ENCODE measurements at regions of chr13 and their contacts with region 1.

Region 1: GRCh38 chr13:98445340-98446233 is 131.3 kb downstream of the STK24 start:
- DNase-seq: peak; percentile 73 to 79 (median 74)
- H3K4me3 ChIP-seq: no peak overlapping the region
- H3K4me3 Mint-ChIP-seq: peak overlapping the region in 7 of 8 donors; percentile 27 to 82 (median 57)
- H3K27ac ChIP-seq: peak overlapping the region; percentile 33
- H3K27ac Mint-ChIP-seq: peak overlapping the region; percentile 88 to 93 (median 90)
- H3K4me1 ChIP-seq: peaks cover 18% of the 10 kb centered on the region
- H3K4me1 Mint-ChIP-seq: peaks cover 7 to 37% (median 23%) of the 10 kb centered on the region in 4 donors
- H3K27me3 ChIP-seq: no peaks in the 10 kb centered on the region
- H3K27me3 Mint-ChIP-seq: no peaks in the 10 kb centered on the region

Region 2: DNA sequence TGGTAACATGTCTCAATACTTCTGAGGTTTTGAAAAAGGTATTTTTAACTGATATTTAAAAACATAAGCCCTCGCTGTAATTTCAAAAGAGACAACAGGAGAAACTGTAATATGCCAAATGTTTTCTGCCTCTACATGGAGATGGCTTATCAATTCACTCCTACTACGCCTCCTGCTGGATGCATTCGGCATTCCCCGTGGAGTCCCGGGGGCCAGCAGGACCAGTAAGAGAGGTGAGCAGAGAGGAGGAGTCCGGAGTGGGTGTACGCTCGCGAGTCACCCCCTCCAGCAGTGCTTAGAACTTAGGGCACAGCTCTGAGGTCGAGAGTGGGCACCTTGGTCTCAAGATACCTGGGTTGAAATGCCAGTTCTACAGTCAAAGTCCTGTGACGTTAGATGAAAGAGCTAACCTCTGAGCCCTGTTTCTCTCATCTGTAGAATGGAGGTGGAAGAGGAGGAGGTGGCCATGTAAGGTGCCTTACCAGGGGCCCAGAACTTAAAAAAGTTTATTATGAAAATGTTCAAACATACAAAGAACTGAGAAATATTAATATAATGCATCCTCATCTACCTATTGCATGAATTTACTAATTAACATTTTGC is 21.1 kb after region 1 on chr13:
- CTCF ChIA-PET with region 1: interaction called, 45 read pairs
- POLR2A ChIA-PET with region 1: no interaction called
- intact Hi-C with region 1: no loop called
- DNase-seq: peak in 1 of 5 donors; percentile 24
- H3K4me3 ChIP-seq: no peak overlapping the region
- H3K4me3 Mint-ChIP-seq: no peak overlapping the region
- H3K27ac ChIP-seq: no peak overlapping the region
- H3K27ac Mint-ChIP-seq: peak overlapping the region in 6 of 7 donors; percentile 47 to 73 (median 58)
- H3K4me1 ChIP-seq: no peaks in the 10 kb centered on the region
- H3K4me1 Mint-ChIP-seq: peaks cover 16 to 35% (median 25%) of the 10 kb centered on the region in 4 donors
- H3K27me3 ChIP-seq: no peaks in the 10 kb centered on the region
- H3K27me3 Mint-ChIP-seq: no peaks in the 10 kb centered on the region

Region 3: DNA sequence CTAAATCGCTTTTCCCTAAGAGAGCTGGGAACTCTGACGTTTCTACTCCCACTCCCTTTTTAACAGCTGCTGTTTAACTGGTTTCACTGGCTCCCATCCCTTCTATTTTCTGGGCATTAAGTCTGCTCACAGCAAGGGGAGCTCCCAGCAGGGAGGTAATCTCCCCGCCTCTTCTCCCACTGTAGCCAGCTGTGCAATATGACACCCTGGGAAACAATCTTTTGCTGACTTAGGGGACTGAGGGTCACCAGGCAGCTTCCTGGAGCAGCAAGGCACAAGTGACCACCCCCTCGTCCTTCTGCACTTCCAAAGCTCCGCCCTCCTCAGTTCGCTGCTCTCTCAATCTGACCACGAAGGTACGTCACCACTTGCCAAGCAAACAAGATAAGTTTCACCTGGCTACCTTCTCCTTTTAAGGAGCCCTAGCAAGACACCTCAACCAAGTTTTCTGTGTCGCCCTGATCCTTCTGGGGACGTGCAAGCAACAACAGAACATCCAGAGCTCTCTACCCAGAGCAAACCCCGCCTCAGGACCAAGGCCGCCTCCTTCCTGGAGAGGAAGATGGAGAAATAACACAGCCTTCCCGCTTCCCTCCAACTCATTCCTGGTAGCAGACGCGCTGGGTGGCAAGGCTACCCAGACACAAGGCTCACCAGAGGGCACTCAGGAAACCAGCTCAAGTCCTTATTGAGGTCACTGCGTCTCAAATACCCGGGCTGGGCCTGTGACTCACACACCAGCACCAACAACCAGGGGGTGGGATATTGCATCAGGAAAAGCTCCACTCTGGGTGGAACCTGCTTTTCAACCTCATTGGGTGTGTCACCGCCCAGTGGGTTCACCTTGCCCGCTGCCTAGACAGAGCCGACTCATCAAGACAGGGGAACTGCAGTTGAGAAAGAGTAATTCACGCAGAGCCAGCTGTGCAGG is 39.0 kb after region 1 on chr13:
- CTCF ChIA-PET with region 1: interaction called, 36 read pairs
- POLR2A ChIA-PET with region 1: interaction called, 3 read pairs
- intact Hi-C with region 1: no loop called
- DNase-seq: peak; percentile 59 to 93 (median 67)
- H3K4me3 ChIP-seq: no peak overlapping the region
- H3K4me3 Mint-ChIP-seq: peak overlapping the region; percentile 3 to 88 (median 80)
- H3K27ac ChIP-seq: peak overlapping the region; percentile 50
- H3K27ac Mint-ChIP-seq: peak overlapping the region; percentile 90 to 98 (median 95)
- H3K4me1 ChIP-seq: peaks cover 94% of the 10 kb centered on the region
- H3K4me1 Mint-ChIP-seq: peaks cover 64 to 93% (median 82%) of the 10 kb centered on the region in 4 donors
- H3K27me3 ChIP-seq: no peaks in the 10 kb centered on the region
- H3K27me3 Mint-ChIP-seq: no peaks in the 10 kb centered on the region

Region 4: DNA sequence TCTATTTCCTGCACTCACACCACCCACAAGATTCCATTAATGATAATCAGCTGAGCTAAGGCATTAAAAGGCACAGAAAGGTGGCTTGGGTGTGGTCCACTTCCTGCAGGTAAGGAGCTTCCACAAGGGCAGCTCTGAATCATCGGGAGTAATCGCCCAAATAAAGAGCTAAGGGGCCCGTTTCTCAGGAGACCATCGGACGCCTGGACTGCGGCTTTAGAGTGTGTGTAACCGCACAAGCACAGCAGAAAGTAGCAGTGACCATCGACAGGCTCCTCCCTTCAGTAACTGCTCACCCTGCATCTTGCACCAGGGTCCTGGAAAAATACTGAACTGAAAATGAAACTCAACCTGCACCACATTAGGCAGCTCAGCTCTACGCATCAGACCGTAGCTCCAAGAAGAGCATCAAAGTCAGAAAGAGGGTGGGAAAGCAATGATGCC is 125.4 kb after region 1 on chr13:
- CTCF ChIA-PET with region 1: interaction called, 19 read pairs
- POLR2A ChIA-PET with region 1: interaction called, 3 read pairs
- intact Hi-C with region 1: no loop called
- DNase-seq: peak; percentile 50 to 75 (median 61)
- H3K4me3 ChIP-seq: peak overlapping the region; percentile 77 to 90
- H3K4me3 Mint-ChIP-seq: peak overlapping the region; percentile 86 to 97 (median 94)
- H3K27ac ChIP-seq: peak overlapping the region; percentile 81
- H3K27ac Mint-ChIP-seq: peak overlapping the region; percentile 95 to 98 (median 98)
- H3K4me1 ChIP-seq: peaks cover 96% of the 10 kb centered on the region
- H3K4me1 Mint-ChIP-seq: peaks cover 70 to 99% (median 85%) of the 10 kb centered on the region in 4 donors
- H3K27me3 ChIP-seq: no peaks in the 10 kb centered on the region
- H3K27me3 Mint-ChIP-seq: no peaks in the 10 kb centered on the region

Region 5: GRCh38 chr13:98609756-98610155 is 164.2 kb after region 1 on chr13:
- CTCF ChIA-PET with region 1: interaction called, 17 read pairs
- POLR2A ChIA-PET with region 1: no interaction called
- intact Hi-C with region 1: no loop called
- DNase-seq: no peak
- H3K4me3 ChIP-seq: no peak overlapping the region
- H3K4me3 Mint-ChIP-seq: no peak overlapping the region
- H3K27ac ChIP-seq: no peak overlapping the region
- H3K27ac Mint-ChIP-seq: no peak overlapping the region
- H3K4me1 ChIP-seq: no peaks in the 10 kb centered on the region
- H3K4me1 Mint-ChIP-seq: no peaks in the 10 kb centered on the region
- H3K27me3 ChIP-seq: no peaks in the 10 kb centered on the region
- H3K27me3 Mint-ChIP-seq: no peaks in the 10 kb centered on the region

Region 6: GRCh38 chr13:98842864-98843481 is 397.4 kb after region 1 on chr13:
- CTCF ChIA-PET with region 1: no interaction called
- POLR2A ChIA-PET with region 1: no interaction called
- intact Hi-C with region 1: loop called (anchors 1 kb)
- DNase-seq: peak; percentile 33 to 47 (median 35)
- H3K4me3 ChIP-seq: no peak overlapping the region
- H3K4me3 Mint-ChIP-seq: no peak overlapping the region
- H3K27ac ChIP-seq: no peak overlapping the region
- H3K27ac Mint-ChIP-seq: peak overlapping the region in 2 of 7 donors; percentile 17 to 36
- H3K4me1 ChIP-seq: no peaks in the 10 kb centered on the region
- H3K4me1 Mint-ChIP-seq: peaks cover 0 to 8% (median 7%) of the 10 kb centered on the region in 4 donors
- H3K27me3 ChIP-seq: no peaks in the 10 kb centered on the region
- H3K27me3 Mint-ChIP-seq: no peaks in the 10 kb centered on the region

Region 7: DNA sequence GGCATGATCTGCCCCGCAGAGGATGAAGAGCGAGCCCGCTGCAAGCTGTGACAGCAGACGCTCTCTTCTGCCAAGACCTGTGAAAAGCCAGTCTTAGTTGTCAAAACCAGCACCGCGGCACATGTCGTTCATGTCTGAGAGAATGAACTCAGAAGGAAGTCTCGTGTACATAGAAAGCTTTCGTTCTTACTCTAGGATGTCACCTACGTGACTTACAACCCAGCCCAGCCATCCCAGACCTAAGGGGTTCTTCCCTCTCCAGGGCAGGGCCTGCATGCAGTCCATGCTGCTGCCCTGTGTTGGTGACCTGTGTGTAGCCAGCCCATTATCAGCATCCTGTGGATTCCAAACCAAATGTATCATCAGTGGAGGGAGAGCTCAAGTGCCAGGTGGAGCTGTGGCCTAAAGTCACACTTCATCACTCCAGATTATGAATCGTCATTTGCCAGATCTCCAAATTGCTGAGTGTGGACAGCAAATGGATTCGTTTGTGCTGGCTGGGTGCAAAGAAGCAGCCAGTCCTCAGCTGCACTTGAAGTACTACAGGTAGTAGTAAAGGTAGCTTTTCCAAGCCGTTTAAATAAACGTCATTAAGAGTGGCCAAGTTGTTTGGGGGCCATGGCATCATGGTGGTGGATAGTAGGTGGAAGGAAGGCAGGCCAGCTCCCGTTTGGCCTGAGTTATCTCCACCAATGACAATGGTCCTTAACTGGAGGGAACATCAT is 935.5 kb after region 1 on chr13:
- CTCF ChIA-PET with region 1: no interaction called
- POLR2A ChIA-PET with region 1: no interaction called
- intact Hi-C with region 1: no loop called
- DNase-seq: peak in 4 of 5 donors; percentile 52 to 67 (median 61)
- H3K4me3 ChIP-seq: peak overlapping the region in 1 of 2 donors; percentile 0
- H3K4me3 Mint-ChIP-seq: peak overlapping the region in 7 of 8 donors; percentile 61 to 89 (median 73)
- H3K27ac ChIP-seq: peak overlapping the region; percentile 51
- H3K27ac Mint-ChIP-seq: peak overlapping the region; percentile 92 to 99 (median 96)
- H3K4me1 ChIP-seq: peaks cover 87% of the 10 kb centered on the region
- H3K4me1 Mint-ChIP-seq: peaks cover 70 to 97% (median 87%) of the 10 kb centered on the region in 4 donors
- H3K27me3 ChIP-seq: no peaks in the 10 kb centered on the region
- H3K27me3 Mint-ChIP-seq: no peaks in the 10 kb centered on the region